Posterior vena cava (tissue), 2 donors: ENCODE measurements at regions of chr1 and their contacts with region 1.

Region 1: DNA sequence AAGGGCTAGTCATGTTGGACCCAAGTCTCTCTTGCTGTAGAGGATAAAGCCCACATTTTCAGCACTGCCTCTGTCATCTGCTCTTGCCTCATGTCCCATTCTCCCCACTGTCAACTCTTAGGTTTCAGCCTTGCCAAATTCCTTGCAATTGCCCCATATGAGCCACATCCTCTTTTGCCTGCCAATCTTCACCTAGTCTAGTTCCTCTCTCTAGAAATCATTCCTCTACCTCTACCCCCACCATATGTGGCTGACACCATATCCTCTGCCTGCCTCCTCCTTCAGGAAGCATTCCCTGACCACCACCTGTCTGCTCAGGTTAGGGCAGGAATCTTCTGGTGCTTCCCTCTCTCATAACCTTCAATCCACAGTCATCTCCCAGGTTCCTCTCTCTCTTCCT is 38.2 kb downstream of the SLC9A1 start:
- DNase-seq: no peak

Region 2: GRCh38 chr1:27154991-27155781 is 38.5 kb after region 1 on chr1 and contains the start of gene SLC9A1:
- intact Hi-C with region 1: loop called (anchors 5 kb)
- DNase-seq: peak; percentile 98
- total RNA-seq, gene SLC9A1: 19.0 to 25.3 TPM